ENCODE measurements at regions of chr5 and their contacts with region 1.

Region 1: GRCh38 chr5:141691867-141692532 is 10.0 kb upstream of the ARAP3 start:
- DNase-seq: peak; percentile 91
- CTCF ChIP-seq: peak; percentile 98

Region 2: GRCh38 chr5:141878711-141879425 is 186.9 kb after region 1 on chr5:
- in situ Hi-C with region 1: loop called (anchors 10 kb)
- DNase-seq: peak; percentile 86
- CTCF ChIP-seq: peak; percentile 97

Region 3: GRCh38 chr5:141951332-141951781 is 259.4 kb after region 1 on chr5:
- in situ Hi-C with region 1: loop called (anchors 10 kb)
- DNase-seq: peak; percentile 61
- CTCF ChIP-seq: peak; percentile 15

Region 4: GRCh38 chr5:142145106-142145900 is 453.3 kb after region 1 on chr5:
- in situ Hi-C with region 1: loop called (anchors 25 kb)
- DNase-seq: peak; percentile 58
- CTCF ChIP-seq: peak; percentile 61

Measured in GM13976 (cell line).